ENCODE measurements at regions of chr7 and their contacts with region 1.

Region 1: GRCh38 chr7:11203683-11204082 is 230.0 kb downstream of the PHF14 start:
- DNase-seq: no peak
- H3K4me3 ChIP-seq: no peak overlapping the region
- H3K27ac ChIP-seq: no peak overlapping the region
- H3K4me1 ChIP-seq: no peaks in the 10 kb centered on the region
- H3K27me3 ChIP-seq: no peaks in the 10 kb centered on the region
- CTCF ChIP-seq: no peak
- POLR2A ChIP-seq: no peak

Region 2: DNA sequence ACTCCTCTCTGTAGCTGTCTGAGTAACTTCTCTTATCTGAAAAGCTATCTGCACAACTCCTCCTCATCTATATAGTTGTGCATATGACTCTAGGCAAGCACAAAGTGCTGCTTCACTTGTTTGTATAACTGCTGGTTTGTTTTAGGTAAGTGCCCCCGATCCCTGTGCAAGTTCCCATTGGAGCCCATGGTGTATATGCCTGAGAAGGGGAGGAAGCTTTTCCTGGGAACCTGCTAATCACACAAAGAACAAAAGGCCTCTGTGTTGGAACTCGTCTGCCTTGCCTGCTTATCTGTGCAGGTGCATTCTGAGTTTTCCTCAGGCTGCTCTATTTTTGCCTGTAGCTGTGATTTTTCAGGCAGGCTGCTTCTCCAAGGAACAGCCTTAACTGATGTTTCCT is 253.2 kb before region 1 on chr7:
- intact Hi-C with region 1: loop called in 1 of 2 experiments (anchors 10 kb)
- DNase-seq: no peak
- H3K4me3 ChIP-seq: no peak overlapping the region
- H3K27ac ChIP-seq: no peak overlapping the region
- H3K4me1 ChIP-seq: no peaks in the 10 kb centered on the region
- H3K27me3 ChIP-seq: no peaks in the 10 kb centered on the region
- CTCF ChIP-seq: no peak
- POLR2A ChIP-seq: no peak